ENCODE measurements at regions of chr12 and their contacts with region 1.

Region 1: DNA sequence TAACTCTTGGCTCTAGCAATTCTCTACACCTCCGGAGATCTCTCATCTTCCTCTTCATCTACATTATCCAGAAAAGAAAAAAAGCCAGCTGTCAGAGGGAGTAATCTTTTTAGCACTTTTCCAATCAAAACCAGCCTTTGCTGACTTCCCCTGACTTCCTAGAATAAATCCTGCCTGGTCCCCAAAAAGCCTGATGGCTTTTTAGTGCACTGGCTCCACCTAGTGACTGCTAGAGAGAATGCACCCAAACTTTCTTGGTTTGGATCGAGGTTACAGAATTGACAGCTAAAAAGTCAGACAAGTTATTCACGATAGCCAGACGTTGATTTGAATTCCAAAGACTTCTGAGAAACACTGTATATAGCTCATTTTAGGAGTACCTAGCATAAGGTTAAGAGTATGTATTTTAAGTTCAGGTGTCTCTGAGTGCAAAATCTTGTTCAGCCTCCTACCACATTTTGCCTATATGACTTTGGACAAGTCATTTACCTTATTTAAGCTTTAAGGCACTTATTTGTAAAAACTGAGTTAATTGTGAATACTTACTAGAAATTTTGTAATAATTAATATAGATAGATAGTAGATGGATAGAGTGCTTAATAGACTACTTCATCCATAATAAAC is 185.7 kb upstream of the GRIN2B start:
- DNase-seq: peak in 9 of 14 experiments; percentile 1 to 56 (median 18)
- ATAC-seq: peak; percentile 43
- H3K4me3 ChIP-seq: no peak overlapping the region
- H3K4me3 Mint-ChIP-seq: no peak overlapping the region
- H3K27ac ChIP-seq: no peak overlapping the region
- H3K27ac Mint-ChIP-seq: no peak overlapping the region
- H3K4me1 ChIP-seq: no peaks in the 10 kb centered on the region
- H3K4me1 Mint-ChIP-seq: no peaks in the 10 kb centered on the region
- H3K27me3 ChIP-seq: no peaks in the 10 kb centered on the region
- H3K27me3 Mint-ChIP-seq: peaks cover 22% of the 10 kb centered on the region
- CTCF ChIP-seq: peak; percentile 99

Region 2: DNA sequence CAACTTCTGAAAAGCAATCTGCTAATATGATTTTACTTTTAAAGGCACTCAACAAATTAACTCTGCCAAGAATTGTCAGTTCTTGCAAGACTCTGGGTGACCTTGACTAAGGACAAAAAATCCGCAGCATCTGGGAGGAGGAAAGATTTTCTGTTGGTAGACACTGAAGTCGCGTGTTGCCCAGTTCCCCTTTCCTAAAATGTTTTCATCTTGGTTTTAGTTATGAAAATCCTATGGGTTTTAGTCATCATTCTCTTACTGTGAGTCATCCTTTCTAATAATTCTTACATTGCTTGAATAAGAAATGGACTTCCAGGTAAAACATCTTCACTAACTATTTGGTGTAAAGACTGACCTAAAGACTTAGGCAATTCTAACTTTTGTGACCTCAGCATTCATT is 1072.8 kb before region 1 on chr12:
- CTCF ChIA-PET with region 1: no interaction called
- POLR2A ChIA-PET with region 1: no interaction called
- intact Hi-C with region 1: loop called in 1 of 2 experiments (anchors 10 kb)
- DNase-seq: peak in 2 of 14 experiments; percentile 52 to 61
- ATAC-seq: no peak
- H3K4me3 ChIP-seq: no peak overlapping the region
- H3K4me3 Mint-ChIP-seq: no peak overlapping the region
- H3K27ac ChIP-seq: no peak overlapping the region
- H3K27ac Mint-ChIP-seq: no peak overlapping the region
- H3K4me1 ChIP-seq: peaks cover 16% of the 10 kb centered on the region
- H3K4me1 Mint-ChIP-seq: peaks cover 19% of the 10 kb centered on the region
- H3K27me3 ChIP-seq: no peaks in the 10 kb centered on the region
- H3K27me3 Mint-ChIP-seq: no peaks in the 10 kb centered on the region
- CTCF ChIP-seq: no peak

Region 3: DNA sequence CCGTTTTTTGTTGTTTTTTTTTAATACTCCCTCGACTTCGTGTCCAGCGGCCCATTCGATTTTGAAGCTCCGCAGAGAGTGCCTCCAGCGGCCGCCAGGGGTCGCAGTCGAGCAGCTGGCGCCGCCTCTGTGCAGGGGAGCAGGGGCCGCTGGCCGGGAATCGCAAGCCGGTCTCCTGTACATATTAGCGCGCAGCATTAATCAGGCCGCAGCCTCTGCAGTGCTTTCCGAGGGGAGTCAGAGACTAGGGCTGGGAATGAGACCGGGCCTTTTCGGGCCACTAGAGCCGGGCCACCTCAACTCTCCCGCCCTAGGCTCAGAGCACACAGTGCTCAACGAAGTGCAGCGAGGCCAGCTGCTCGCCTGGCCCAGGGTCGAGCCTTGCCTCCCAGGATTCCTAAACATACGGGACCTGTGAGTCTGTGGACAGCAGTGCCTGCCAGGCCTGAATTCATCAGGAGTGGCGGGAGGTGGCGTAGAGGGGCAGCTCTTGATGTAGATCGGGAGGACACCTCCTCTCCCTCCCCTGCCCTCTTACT is 888.8 kb before region 1 on chr12:
- CTCF ChIA-PET with region 1: interaction called, 3 read pairs
- POLR2A ChIA-PET with region 1: no interaction called
- intact Hi-C with region 1: loop called in 1 of 2 experiments (anchors 2 kb)
- DNase-seq: peak; percentile 18 to 77 (median 52)
- ATAC-seq: peak; percentile 91
- H3K4me3 ChIP-seq: no peak overlapping the region
- H3K4me3 Mint-ChIP-seq: no peak overlapping the region
- H3K27ac ChIP-seq: no peak overlapping the region
- H3K27ac Mint-ChIP-seq: no peak overlapping the region
- H3K4me1 ChIP-seq: peaks cover 6% of the 10 kb centered on the region
- H3K4me1 Mint-ChIP-seq: peaks cover 7% of the 10 kb centered on the region
- H3K27me3 ChIP-seq: peaks cover 18 to 42% of the 10 kb centered on the region in 2 experiments
- H3K27me3 Mint-ChIP-seq: peaks cover 42% of the 10 kb centered on the region
- CTCF ChIP-seq: peak; percentile 100

Region 4: DNA sequence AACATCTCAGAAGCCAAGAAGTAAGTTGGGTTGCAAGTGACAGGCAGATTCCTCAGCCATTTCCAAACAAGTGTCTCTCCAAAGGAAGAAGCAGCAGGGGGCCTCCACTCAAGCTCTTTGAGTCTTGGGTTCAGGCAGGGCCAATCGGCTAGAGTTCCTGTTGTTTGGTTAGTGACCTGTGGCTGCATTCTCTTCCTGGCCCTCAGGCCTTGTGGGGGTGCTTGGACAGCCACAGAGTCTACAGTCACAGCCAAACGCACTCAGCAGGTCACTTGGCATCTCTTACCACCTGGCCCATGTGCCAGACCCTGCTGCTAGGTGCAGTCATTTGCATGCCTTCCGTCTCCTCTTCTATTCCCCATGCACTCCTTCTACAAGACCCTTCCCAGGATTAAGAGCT is 539.6 kb before region 1 on chr12:
- CTCF ChIA-PET with region 1: no interaction called
- POLR2A ChIA-PET with region 1: no interaction called
- intact Hi-C with region 1: loop called in 1 of 2 experiments (anchors 5 kb)
- DNase-seq: no peak
- ATAC-seq: no peak
- H3K4me3 ChIP-seq: no peak overlapping the region
- H3K4me3 Mint-ChIP-seq: no peak overlapping the region
- H3K27ac ChIP-seq: no peak overlapping the region
- H3K27ac Mint-ChIP-seq: no peak overlapping the region
- H3K4me1 ChIP-seq: no peaks in the 10 kb centered on the region
- H3K4me1 Mint-ChIP-seq: no peaks in the 10 kb centered on the region
- H3K27me3 ChIP-seq: no peaks in the 10 kb centered on the region
- H3K27me3 Mint-ChIP-seq: peaks cover 3% of the 10 kb centered on the region
- CTCF ChIP-seq: no peak

Region 5: GRCh38 chr12:13864081-13864673 is 302.9 kb before region 1 on chr12:
- CTCF ChIA-PET with region 1: no interaction called
- POLR2A ChIA-PET with region 1: no interaction called
- intact Hi-C with region 1: loop called in 1 of 2 experiments (anchors 5 kb)
- DNase-seq: peak; percentile 4 to 60 (median 25)
- ATAC-seq: peak; percentile 32
- H3K4me3 ChIP-seq: no peak overlapping the region
- H3K4me3 Mint-ChIP-seq: no peak overlapping the region
- H3K27ac ChIP-seq: no peak overlapping the region
- H3K27ac Mint-ChIP-seq: no peak overlapping the region
- H3K4me1 ChIP-seq: no peaks in the 10 kb centered on the region
- H3K4me1 Mint-ChIP-seq: no peaks in the 10 kb centered on the region
- H3K27me3 ChIP-seq: no peaks in the 10 kb centered on the region
- H3K27me3 Mint-ChIP-seq: peaks cover 51% of the 10 kb centered on the region
- CTCF ChIP-seq: peak; percentile 64

Region 6: DNA sequence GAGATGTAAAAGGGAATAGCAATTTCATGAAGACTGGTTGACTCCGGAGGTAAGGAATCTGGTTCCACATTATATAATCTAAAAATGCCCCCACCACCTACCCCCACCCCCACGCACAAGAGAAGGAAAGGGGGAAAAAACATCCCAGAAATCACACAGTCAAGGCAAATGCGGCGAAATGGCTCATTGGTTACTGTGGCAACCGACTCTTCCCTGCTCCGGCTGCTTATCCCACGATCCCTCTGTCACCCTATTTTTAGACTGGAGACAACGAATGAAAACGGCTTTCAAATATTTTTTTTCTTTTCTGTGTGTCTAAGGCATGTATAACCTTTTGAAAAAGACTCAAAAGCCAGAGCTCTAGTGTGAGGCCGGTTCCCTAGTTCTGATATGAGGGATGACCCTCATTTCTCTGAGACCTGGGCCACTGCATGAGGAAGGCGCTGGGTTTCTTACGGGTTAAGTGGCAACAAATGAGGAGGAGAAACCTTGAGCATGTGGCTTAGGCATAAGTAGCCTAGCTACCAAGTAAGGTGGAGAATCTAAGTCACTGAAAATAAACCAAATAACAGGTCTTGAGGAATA is 37.4 kb before region 1 on chr12:
- CTCF ChIA-PET with region 1: no interaction called
- POLR2A ChIA-PET with region 1: no interaction called
- intact Hi-C with region 1: no loop called
- DNase-seq: no peak
- ATAC-seq: no peak
- H3K4me3 ChIP-seq: no peak overlapping the region
- H3K4me3 Mint-ChIP-seq: no peak overlapping the region
- H3K27ac ChIP-seq: no peak overlapping the region
- H3K27ac Mint-ChIP-seq: no peak overlapping the region
- H3K4me1 ChIP-seq: no peaks in the 10 kb centered on the region
- H3K4me1 Mint-ChIP-seq: no peaks in the 10 kb centered on the region
- H3K27me3 ChIP-seq: no peaks in the 10 kb centered on the region
- H3K27me3 Mint-ChIP-seq: peaks cover 18% of the 10 kb centered on the region
- CTCF ChIP-seq: no peak

Measured in CD4-positive, alpha-beta T cell (primary cell).